ENCODE measurements at regions of chr5 and their contacts with region 1.

Region 1: DNA sequence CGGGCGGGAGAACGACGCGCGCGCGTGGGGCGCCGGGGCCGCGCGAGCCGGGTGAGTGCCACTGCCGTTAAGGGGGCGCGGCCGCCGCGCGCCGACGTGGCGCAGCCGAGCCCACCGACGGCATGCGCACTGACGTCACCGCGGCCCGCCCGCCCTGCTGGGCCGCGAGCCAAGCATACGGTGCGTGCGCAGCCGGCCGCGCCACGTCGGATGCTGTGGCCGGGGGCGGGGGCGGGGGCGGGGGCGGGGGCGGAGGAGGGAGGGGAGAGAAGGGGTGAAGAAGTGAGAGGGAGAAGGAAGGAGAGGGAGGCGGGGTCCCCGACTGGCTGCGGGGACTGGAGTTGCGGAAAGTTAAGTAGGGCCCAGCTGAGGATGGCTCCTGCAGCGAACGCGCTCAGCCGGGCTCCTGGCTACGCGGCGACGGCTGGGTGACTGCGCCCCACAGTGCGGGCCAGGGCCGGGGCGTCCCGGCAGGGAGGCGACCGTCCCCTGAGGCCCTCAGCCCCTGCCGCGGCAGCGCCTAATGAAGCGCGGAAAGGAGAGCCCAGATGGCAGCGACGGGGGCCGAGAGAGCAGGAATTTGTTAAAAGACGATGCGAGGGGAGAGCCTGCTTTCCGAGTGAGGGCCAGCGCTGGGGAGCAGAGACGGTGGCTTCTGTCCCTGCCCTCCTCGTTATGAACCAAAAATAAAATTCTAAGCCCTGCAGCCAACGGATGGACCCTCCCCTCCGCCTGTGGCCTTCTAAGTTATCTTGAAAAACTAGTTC is at the start of gene DAP:
- DNase-seq: peak; percentile 90
- total RNA-seq, gene DAP: 56.2 TPM

Region 2: DNA sequence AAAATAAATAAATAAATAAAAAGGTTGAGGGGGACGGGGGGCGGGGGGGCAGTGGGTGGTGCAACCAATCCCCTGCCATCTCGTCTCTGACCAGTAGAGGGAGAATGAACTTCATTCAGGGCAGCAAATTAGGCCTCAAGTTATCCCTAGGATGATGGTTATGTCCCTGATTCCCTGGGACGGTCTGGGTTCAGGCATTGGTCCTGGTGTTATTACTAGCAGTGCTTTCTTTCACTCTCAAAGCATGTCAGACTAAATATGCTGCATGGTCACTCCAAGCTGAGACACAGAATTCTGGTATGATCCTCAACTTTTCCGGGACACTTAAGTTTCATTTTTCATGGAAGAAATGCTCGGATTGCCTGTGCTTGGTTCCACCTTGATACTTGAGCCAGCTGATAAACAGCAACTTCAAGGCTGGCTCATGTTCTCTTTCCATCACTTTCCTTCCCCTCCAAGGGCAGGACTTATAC is 59.7 kb before region 1 on chr5:
- intact Hi-C with region 1: loop called (anchors 5 kb)
- DNase-seq: no peak

Region 3: GRCh38 chr5:10724799-10725507 is 36.4 kb before region 1 on chr5:
- intact Hi-C with region 1: loop called (anchors 2 kb)
- DNase-seq: no peak

Region 4: DNA sequence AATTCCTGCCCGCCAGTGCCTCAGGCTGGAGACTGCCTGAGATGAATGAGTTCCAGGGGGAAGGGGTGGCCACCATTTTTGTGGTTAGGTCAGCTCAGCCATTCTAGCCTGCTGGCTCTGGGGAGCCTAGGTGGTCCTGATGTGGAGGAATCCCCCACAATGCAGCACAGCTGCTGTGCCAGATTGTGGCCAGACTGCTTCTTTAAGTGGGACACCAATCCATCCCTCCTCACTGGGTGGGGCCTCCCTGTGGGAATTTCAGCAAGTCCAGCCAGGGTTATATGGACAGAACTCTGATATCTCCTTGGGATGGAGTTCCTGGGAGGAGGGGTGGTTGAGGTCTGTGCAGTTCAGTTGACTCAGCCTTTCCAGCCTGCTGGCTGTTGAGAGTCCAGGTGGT is 50.9 kb after region 1 on chr5:
- intact Hi-C with region 1: no loop called
- DNase-seq: no peak

Measured in cardiac septum (tissue), 1 donor.